Panc1 (cell line): ENCODE measurements at regions of chr12 and their contacts with region 1.

Region 1: GRCh38 chr12:93733358-93733757 is 56.2 kb downstream of the CRADD start:
- DNase-seq: no peak
- ATAC-seq: no peak
- H3K4me3 ChIP-seq: no peak overlapping the region
- H3K27ac ChIP-seq: no peak overlapping the region
- H3K4me1 ChIP-seq: no peaks in the 10 kb centered on the region
- H3K27me3 ChIP-seq: no peaks in the 10 kb centered on the region
- CTCF ChIP-seq: no peak

Region 2: DNA sequence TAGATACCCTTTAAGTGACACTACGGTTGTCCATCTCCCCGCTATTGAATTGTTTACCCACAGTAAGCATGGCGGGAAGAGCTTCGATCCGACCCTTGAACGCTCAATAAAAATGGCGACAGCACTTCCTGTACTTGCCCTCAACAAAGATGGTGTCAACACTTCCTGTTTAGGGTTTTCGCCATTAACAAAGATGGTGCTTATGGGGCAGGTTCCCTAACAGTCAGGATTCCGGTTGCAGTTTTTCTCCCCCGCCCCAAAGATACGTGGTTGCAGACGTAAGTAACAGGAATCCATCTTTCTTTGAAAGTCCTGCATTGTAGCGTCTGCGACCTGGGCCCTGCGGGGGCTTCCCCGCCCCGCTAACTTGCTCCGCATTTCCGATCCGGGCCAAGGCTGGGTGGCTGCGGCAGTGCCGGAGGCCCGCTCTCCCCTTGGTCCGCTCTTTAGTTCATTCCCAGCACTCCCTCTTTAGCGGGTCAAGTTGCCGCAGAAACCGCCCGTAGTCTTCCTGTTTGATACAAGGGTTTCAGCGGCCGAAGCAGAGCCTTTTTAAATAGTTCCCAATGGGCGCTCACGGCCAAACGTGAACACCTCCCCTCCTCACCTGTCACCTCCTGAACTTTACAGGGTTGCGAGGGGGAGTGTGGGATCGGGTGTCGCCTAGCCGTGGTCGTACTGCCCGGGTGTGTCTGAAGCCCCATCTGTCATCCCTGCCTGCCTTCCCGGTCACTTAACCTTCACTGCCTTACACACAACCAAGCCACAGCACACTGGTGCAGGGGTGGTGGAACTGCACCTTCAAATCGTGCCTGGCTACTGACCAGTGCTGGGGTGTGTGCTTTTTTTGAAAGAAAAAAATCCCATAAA is 55.9 kb before region 1 on chr12 and contains the start of gene CRADD:
- CTCF ChIA-PET with region 1: no interaction called
- POLR2A ChIA-PET with region 1: no interaction called
- in situ Hi-C with region 1: no loop called
- intact Hi-C with region 1: loop called (anchors 5 kb)
- DNase-seq: peak; percentile 83
- ATAC-seq: peak; percentile 91
- H3K4me3 ChIP-seq: peak within 1 kb of the TSS; percentile 74 to 85
- H3K27ac ChIP-seq: peak within 1 kb of the TSS; percentile 96
- H3K4me1 ChIP-seq: peaks cover 18% of the 10 kb centered on the region
- H3K27me3 ChIP-seq: no peaks in the 10 kb centered on the region
- CTCF ChIP-seq: no peak
- total RNA-seq, gene CRADD: 7.0 TPM

Region 3: GRCh38 chr12:94080348-94081009 is 347.1 kb after region 1 on chr12:
- CTCF ChIA-PET with region 1: no interaction called
- POLR2A ChIA-PET with region 1: interaction called, 12 read pairs
- in situ Hi-C with region 1: no loop called
- intact Hi-C with region 1: no loop called
- DNase-seq: no peak
- ATAC-seq: no peak
- H3K4me3 ChIP-seq: no peak overlapping the region
- H3K27ac ChIP-seq: no peak overlapping the region
- H3K4me1 ChIP-seq: no peaks in the 10 kb centered on the region
- H3K27me3 ChIP-seq: no peaks in the 10 kb centered on the region
- CTCF ChIP-seq: no peak